ENCODE measurements at regions of chr19 and their contacts with region 1.

Region 1: GRCh38 chr19:15841875-15842569 is 26.6 kb upstream of the OR10H1 start:
- DNase-seq: no peak
- ATAC-seq: no peak
- H3K4me3 ChIP-seq: no peak overlapping the region
- H3K27ac ChIP-seq: no peak overlapping the region
- H3K4me1 ChIP-seq: no peaks in the 10 kb centered on the region
- H3K27me3 ChIP-seq: peaks cover 3% of the 10 kb centered on the region; the same call in 1 of the 2 replicates
- CTCF ChIP-seq: peak; percentile 38

Region 2: GRCh38 chr19:15748239-15748638 is 93.8 kb before region 1 on chr19:
- CTCF ChIA-PET with region 1: no interaction called
- POLR2A ChIA-PET with region 1: no interaction called
- in situ Hi-C with region 1: no loop called
- intact Hi-C with region 1: no loop called
- DNase-seq: no peak
- ATAC-seq: no peak
- H3K4me3 ChIP-seq: no peak overlapping the region
- H3K27ac ChIP-seq: no peak overlapping the region
- H3K4me1 ChIP-seq: no peaks in the 10 kb centered on the region
- H3K27me3 ChIP-seq: peaks cover 6% of the 10 kb centered on the region; the same call in 1 of the 2 replicates
- CTCF ChIP-seq: no peak

Region 3: DNA sequence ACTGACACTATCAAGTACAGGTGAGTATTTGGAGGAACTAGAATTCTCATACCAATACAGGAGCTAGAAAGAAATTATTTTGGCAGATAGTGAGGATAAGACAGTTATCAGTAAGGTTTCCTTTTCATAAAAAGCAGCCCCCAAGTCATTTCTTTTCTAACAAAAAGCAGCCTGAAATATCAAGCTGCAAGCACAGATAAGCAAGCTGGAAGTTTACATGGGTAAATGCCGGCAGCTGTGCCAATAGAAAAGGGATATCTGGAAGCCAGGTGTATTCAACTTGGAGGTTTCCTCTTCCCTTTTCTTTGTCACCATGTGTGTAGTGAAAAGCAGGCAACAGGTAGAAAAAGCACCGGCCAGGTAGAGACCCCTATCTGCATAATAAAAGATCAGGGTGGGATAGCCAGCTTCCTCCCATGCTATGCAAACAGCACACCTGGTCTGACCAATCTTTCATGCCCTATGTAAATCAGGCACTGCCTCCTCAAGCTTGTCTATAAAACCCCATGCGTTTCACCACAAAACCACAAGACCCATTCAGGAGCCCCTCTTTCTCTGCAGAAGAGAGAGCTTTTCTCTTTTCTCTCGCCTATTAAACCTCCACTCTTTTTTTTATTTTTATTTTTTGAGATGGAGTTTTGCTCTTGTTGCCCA is 32.9 kb after region 1 on chr19:
- CTCF ChIA-PET with region 1: no interaction called
- POLR2A ChIA-PET with region 1: interaction called, 11 read pairs
- in situ Hi-C with region 1: no loop called
- intact Hi-C with region 1: no loop called
- DNase-seq: no peak
- ATAC-seq: no peak
- H3K4me3 ChIP-seq: no peak overlapping the region
- H3K27ac ChIP-seq: no peak overlapping the region
- H3K4me1 ChIP-seq: no peaks in the 10 kb centered on the region
- H3K27me3 ChIP-seq: peaks cover 8% of the 10 kb centered on the region
- CTCF ChIP-seq: no peak

Measured in Panc1 (cell line).